ENCODE measurements at regions of chr4 and their contacts with region 1.

Region 1: GRCh38 chr4:51831133-51831532 is 11.8 kb upstream of the DCUN1D4 start:
- DNase-seq: peak; percentile 41 to 79 (median 68)
- ATAC-seq: peak; percentile 63
- H3K4me3 ChIP-seq: no peak overlapping the region
- H3K4me3 Mint-ChIP-seq: no peak overlapping the region
- H3K27ac ChIP-seq: no peak overlapping the region
- H3K27ac Mint-ChIP-seq: no peak overlapping the region
- H3K4me1 ChIP-seq: no peaks in the 10 kb centered on the region
- H3K4me1 Mint-ChIP-seq: no peaks in the 10 kb centered on the region
- H3K27me3 ChIP-seq: no peaks in the 10 kb centered on the region
- H3K27me3 Mint-ChIP-seq: peaks cover 11% of the 10 kb centered on the region
- CTCF ChIP-seq: peak; percentile 64

Region 2: DNA sequence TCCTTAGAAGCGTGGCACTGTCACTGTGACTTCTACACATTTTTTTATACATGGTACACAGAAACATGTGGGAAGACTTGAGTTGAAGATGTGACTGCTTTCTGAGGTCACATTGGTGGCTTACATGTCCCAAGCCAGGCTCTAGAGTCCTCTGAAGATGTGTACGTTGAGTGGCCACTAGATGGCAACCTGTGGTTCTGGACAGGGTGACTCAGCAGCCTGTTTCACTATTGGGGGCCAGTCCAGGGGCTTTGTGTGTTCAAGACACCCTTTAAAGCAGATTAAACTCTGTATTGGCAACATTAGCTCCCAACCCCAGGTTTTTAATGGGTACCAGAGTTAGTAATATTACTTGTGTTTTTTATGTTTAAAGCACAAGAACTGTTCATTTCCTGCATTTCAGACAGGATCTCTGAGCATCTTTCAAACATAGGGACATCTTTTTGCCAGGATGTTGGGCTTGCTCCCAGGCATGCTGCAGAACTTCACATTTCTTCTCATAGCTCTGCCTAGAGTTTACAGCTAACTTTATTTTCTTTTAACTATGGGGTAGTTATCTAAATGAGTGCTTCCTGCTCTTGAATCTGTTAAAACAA is 64.8 kb after region 1 on chr4:
- CTCF ChIA-PET with region 1: interaction called, 10 read pairs
- POLR2A ChIA-PET with region 1: no interaction called
- intact Hi-C with region 1: loop called in 1 of 2 experiments (anchors 1 kb)
- DNase-seq: peak; percentile 1 to 70 (median 42)
- ATAC-seq: peak; percentile 80
- H3K4me3 ChIP-seq: no peak overlapping the region
- H3K4me3 Mint-ChIP-seq: no peak overlapping the region
- H3K27ac ChIP-seq: no peak overlapping the region
- H3K27ac Mint-ChIP-seq: no peak overlapping the region
- H3K4me1 ChIP-seq: no peaks in the 10 kb centered on the region
- H3K4me1 Mint-ChIP-seq: peaks cover 5% of the 10 kb centered on the region
- H3K27me3 ChIP-seq: no peaks in the 10 kb centered on the region
- H3K27me3 Mint-ChIP-seq: no peaks in the 10 kb centered on the region
- CTCF ChIP-seq: peak; percentile 67

Region 3: DNA sequence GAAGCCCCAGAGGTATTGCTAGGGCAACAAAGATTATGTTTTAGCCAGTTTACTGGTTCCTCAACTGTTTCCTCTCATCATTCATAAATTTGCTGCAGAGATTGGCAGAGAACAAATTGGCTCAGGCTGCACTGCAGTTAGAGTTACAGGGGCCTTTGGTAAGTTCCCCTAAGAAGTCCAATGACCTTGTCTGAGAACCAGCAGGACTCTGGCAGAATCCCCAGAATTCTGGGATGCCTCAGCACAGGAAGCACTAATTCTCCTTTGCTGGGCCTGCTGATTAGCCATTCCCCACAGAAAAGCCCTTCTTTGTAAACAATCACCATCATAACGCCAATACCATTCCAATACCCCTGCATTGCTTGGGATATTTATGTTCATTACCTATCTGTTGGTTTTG is 676.6 kb after region 1 on chr4:
- CTCF ChIA-PET with region 1: no interaction called
- POLR2A ChIA-PET with region 1: no interaction called
- intact Hi-C with region 1: no loop called
- DNase-seq: no peak
- ATAC-seq: no peak
- H3K4me3 ChIP-seq: no peak overlapping the region
- H3K4me3 Mint-ChIP-seq: no peak overlapping the region
- H3K27ac ChIP-seq: no peak overlapping the region
- H3K27ac Mint-ChIP-seq: no peak overlapping the region
- H3K4me1 ChIP-seq: no peaks in the 10 kb centered on the region
- H3K4me1 Mint-ChIP-seq: no peaks in the 10 kb centered on the region
- H3K27me3 ChIP-seq: no peaks in the 10 kb centered on the region
- H3K27me3 Mint-ChIP-seq: peaks cover 7% of the 10 kb centered on the region
- CTCF ChIP-seq: no peak

Region 4: DNA sequence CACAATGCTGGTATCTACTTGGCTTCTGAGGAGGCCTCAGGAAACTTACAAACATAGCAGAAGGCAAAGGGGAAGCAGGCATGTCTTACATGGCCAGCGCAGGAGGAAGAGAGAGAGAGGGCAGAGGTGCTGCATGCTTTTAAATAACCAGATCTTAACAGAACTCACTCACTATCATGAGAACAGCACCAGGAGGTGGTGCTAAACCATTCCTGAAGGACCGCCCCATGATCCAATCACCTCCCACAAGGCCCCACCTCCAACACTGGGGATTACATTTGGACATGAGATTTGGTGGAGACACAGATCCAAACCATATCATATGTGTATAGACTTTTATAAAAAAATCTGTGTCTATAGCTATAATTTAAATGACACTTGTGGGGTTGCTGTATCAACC is 968.7 kb after region 1 on chr4:
- CTCF ChIA-PET with region 1: no interaction called
- POLR2A ChIA-PET with region 1: no interaction called
- intact Hi-C with region 1: no loop called
- DNase-seq: no peak
- ATAC-seq: no peak
- H3K4me3 ChIP-seq: no peak overlapping the region
- H3K4me3 Mint-ChIP-seq: no peak overlapping the region
- H3K27ac ChIP-seq: no peak overlapping the region
- H3K27ac Mint-ChIP-seq: no peak overlapping the region
- H3K4me1 ChIP-seq: no peaks in the 10 kb centered on the region
- H3K4me1 Mint-ChIP-seq: no peaks in the 10 kb centered on the region
- H3K27me3 ChIP-seq: no peaks in the 10 kb centered on the region
- H3K27me3 Mint-ChIP-seq: peaks cover 11% of the 10 kb centered on the region
- CTCF ChIP-seq: no peak

Measured in CD8-positive, alpha-beta T cell (primary cell).